ENCODE measurements at regions of chr17 and their contacts with region 1.

Region 1: DNA sequence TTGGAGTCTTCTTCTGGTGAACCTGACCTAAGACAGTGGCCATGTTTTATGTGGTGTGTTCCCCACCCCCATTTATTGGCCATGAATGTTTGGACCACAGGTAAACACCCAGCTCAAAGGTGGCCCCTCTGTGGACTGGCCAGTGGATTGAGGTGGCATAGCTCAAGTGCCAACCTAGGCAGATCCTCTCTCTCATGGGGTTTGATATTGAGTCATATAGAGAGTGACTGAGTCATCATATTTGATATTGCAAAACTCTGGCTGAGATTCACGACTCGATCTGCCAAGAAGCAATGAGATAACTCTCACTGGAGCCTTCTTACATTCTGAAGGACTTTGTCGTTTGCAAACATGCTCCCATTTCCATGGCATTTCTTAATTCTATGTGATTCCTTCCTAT is 10.5 kb upstream of the TEKT3 start:
- DNase-seq: no peak
- H3K4me3 ChIP-seq: no peak overlapping the region
- H3K27ac ChIP-seq: no peak overlapping the region
- H3K4me1 ChIP-seq: no peaks in the 10 kb centered on the region
- H3K27me3 ChIP-seq: no peaks in the 10 kb centered on the region
- CTCF ChIP-seq: no peak
- POLR2A ChIP-seq: no peak

Region 2: GRCh38 chr17:15171167-15172047 is 180.5 kb before region 1 on chr17:
- intact Hi-C with region 1: no loop called
- DNase-seq: peak; percentile 33
- H3K4me3 ChIP-seq: no peak overlapping the region
- H3K27ac ChIP-seq: no peak overlapping the region
- H3K4me1 ChIP-seq: no peaks in the 10 kb centered on the region
- H3K27me3 ChIP-seq: no peaks in the 10 kb centered on the region
- CTCF ChIP-seq: peak in 3 of 4 experiments; percentile 61 to 69 (median 62)
- POLR2A ChIP-seq: no peak

Region 3: GRCh38 chr17:15307710-15308111 is 44.2 kb before region 1 on chr17:
- intact Hi-C with region 1: loop called (anchors 5 kb)
- DNase-seq: no peak
- H3K4me3 ChIP-seq: no peak overlapping the region
- H3K27ac ChIP-seq: no peak overlapping the region
- H3K4me1 ChIP-seq: no peaks in the 10 kb centered on the region
- H3K27me3 ChIP-seq: no peaks in the 10 kb centered on the region
- CTCF ChIP-seq: no peak
- POLR2A ChIP-seq: no peak

Region 4: GRCh38 chr17:15392326-15392741 is 40.4 kb after region 1 on chr17:
- intact Hi-C with region 1: loop called (anchors 5 kb)
- DNase-seq: no peak
- H3K4me3 ChIP-seq: no peak overlapping the region
- H3K27ac ChIP-seq: no peak overlapping the region
- H3K4me1 ChIP-seq: no peaks in the 10 kb centered on the region
- H3K27me3 ChIP-seq: no peaks in the 10 kb centered on the region
- CTCF ChIP-seq: no peak
- POLR2A ChIP-seq: no peak

Region 5: DNA sequence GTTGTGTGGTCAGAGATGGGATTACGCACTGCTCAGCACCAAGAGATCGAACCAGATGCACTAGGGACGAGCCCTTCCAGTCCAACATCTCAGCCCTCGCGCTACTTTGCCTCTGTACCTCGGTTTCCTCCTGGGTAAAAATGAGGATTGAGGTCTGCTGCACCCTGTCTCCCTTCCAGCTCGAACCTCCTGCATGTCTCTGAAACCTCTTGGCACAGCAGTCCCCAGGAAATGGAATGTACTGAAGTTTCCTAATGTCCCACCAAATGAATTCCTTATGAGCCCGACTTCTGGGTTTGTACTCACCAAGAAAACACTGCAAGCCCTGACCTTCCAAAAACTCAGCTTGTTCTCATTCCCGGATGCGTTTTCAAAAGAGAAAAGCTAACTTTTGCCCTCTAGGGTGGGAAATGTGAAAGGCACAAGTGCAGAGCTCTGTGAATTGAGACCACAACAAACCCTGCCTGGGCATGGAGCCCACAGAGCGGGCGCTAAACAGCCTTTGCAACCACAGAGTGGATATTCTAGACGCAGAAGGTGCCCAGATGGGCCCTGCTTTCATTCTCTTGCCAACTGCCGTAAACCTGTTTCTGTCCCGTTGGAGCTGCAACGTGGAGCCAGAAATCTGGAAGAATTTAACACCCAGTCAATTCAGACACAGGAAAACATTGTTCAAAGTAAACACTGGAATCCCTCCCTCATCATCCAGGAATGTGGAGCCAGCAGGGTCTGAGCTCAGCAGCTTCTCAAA is 105.2 kb after region 1 on chr17:
- intact Hi-C with region 1: loop called (anchors 10 kb)
- DNase-seq: no peak
- H3K4me3 ChIP-seq: no peak overlapping the region
- H3K27ac ChIP-seq: peak overlapping the region; percentile 42 to 47
- H3K4me1 ChIP-seq: peaks cover 5% of the 10 kb centered on the region
- H3K27me3 ChIP-seq: no peaks in the 10 kb centered on the region
- CTCF ChIP-seq: peak in 1 of 4 experiments; percentile 31
- POLR2A ChIP-seq: no peak

Region 6: GRCh38 chr17:15883617-15884111 is 531.7 kb after region 1 on chr17:
- intact Hi-C with region 1: no loop called
- DNase-seq: no peak
- H3K4me3 ChIP-seq: no peak overlapping the region
- H3K27ac ChIP-seq: no peak overlapping the region
- H3K4me1 ChIP-seq: no peaks in the 10 kb centered on the region
- H3K27me3 ChIP-seq: no peaks in the 10 kb centered on the region
- CTCF ChIP-seq: no peak
- POLR2A ChIP-seq: no peak